Cardiac septum (tissue), 1 donor: ENCODE measurements at regions of chr13 and their contacts with region 1.

Region 1: DNA sequence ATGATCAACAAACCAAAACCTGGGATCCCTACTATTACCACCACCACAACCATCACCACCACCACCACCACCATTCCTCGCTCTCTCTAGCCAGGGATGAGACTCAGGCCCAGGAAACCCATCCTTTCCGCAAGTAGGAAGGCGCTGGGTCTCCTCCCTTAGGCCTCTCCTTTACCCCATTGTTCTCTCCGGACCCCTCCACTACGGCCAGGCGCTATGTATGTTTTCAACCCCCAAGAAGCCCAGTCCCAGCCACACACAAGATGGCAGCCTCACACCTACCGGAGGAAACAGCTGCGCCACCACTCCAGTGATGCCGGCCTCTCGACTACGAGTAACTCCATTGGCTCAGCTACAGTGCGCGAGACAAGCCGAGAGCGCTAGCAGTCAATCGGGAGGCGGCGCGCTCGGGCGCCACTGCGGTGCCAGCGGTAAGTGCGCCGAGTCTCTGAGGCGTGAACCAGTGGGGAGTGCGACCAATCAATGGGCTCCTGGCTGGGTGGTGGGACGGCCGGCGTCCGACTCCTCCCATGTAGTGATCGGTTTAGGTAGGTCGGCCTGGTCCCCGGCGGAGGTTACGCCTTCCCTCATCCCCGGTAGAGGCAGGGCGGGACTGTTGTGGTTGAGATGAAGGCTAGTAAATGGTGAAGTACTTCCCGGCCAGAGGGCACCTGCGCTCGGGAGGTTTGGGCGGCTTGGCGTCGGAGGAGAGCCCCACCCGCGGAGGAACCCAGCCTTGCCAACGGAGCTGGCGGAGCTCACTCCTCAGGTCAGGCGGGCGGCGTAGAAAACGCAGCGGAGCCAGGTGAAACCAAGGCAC is at the starts of genes CAB39L and SETDB2:
- DNase-seq: peak; percentile 100
- total RNA-seq, gene CAB39L: 9.8 TPM
- total RNA-seq, gene SETDB2: 11.2 TPM

Region 2: DNA sequence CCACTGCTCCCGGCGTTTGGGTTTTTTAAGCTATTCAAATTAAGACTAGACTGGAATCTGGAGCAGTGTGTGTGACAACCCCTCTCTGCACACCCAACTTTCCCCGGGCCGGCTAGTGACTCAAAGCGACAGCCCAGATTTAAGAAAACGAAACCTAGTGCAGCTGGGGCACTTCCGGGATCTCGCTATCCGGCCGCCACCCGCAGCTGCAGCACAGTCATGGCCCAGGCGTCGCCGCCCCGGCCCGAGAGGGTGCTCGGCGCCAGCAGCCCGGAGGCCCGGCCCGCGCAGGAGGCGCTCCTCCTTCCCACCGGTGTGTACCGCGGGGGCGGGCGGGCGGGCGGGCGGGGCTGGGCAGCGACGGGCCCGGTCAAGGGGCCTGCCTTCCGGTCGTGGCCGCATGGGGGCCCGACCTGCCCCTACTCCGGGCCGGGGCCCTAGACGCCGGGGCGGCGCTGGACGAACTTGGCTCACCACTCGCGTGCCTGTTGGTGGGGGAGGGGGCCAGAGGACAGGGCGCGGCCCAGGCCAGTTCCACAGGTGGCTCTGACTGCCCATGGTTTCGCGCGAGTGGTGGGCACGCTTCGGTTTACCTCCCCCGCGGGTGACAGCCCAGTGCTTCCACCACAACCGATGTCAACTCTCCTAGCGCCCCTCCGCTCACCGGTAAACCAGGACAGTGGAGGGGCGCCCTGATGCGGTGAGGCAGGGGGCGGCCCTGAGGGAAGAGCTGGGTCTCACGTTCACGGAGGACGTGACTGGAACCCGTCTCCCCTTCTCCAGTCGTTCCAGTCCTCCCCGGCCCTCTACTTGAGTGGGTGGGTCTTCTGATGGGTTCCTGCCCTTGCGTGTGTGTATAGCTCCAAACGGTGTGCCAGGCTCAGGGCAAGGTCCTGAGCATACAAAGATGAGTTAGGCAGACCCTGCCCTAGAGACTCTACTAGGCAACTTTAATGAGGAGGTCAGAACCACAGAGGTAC is 52.2 kb after region 1 on chr13 and contains the start of gene PHF11:
- intact Hi-C with region 1: loop called (anchors 2 kb)
- DNase-seq: peak; percentile 93
- total RNA-seq, gene PHF11: 20.5 TPM

Region 3: GRCh38 chr13:49890376-49890775 is 446.5 kb after region 1 on chr13:
- intact Hi-C with region 1: no loop called
- DNase-seq: no peak